ENCODE measurements at regions of chr20 and their contacts with region 1.

Region 1: GRCh38 chr20:44683263-44684046 is 31.7 kb upstream of the CCN5 start:
- DNase-seq: peak; percentile 28
- H3K4me3 Mint-ChIP-seq: no peak overlapping the region
- H3K27ac Mint-ChIP-seq: no peak overlapping the region
- H3K4me1 Mint-ChIP-seq: peaks cover 5% of the 10 kb centered on the region
- H3K27me3 Mint-ChIP-seq: peaks cover 5% of the 10 kb centered on the region

Region 2: DNA sequence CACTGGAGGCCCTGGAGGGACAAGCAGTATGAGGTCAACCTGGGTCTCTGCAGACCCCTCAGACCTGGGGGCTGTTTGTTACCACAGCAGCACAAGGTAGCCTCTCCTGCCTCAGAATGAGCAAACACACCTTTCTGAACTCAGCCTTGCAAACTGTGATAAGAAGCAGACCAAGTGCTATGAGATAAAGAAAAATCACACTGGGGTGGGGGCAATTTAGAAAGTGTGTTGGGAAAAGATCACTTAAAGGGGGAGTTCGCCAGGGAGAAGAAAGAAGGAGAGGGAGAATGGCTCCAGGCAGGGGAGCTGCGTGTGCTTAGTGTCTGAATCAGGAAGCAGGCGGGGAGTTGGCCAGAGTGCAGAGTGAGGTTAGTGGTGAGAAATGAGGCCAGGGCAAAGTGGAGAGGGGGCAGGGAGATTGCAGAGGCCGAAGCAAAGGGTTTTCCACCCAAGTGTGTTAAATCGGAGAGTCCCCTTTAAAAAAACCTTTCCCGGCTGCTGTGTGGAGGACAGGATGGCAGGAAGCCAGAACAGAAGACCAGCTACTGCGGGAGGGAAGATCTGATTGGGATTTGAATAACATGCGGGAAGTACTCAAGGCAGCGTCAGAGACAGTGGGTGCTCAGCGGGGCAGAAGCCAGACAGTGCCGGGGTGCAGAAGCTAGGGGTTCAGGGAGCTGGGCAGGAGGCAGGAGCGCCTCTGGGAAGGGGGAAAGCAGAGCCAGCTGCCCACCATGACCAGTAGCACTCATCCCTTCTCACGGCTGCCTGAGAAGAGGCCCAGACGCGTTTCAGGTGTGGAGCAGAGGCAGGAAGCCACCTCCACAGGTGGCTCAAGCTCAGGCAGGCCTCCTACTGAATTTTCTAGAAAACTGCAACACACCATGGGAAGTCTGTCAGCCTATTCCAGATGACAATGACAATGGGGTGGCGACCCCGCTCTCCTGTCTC is 41.0 kb before region 1 on chr20:
- intact Hi-C with region 1: loop called (anchors 5 kb)
- DNase-seq: no peak
- H3K4me3 Mint-ChIP-seq: peak overlapping the region; percentile 14
- H3K27ac Mint-ChIP-seq: peak overlapping the region; percentile 87
- H3K4me1 Mint-ChIP-seq: peaks cover 60% of the 10 kb centered on the region
- H3K27me3 Mint-ChIP-seq: no peaks in the 10 kb centered on the region

Region 3: DNA sequence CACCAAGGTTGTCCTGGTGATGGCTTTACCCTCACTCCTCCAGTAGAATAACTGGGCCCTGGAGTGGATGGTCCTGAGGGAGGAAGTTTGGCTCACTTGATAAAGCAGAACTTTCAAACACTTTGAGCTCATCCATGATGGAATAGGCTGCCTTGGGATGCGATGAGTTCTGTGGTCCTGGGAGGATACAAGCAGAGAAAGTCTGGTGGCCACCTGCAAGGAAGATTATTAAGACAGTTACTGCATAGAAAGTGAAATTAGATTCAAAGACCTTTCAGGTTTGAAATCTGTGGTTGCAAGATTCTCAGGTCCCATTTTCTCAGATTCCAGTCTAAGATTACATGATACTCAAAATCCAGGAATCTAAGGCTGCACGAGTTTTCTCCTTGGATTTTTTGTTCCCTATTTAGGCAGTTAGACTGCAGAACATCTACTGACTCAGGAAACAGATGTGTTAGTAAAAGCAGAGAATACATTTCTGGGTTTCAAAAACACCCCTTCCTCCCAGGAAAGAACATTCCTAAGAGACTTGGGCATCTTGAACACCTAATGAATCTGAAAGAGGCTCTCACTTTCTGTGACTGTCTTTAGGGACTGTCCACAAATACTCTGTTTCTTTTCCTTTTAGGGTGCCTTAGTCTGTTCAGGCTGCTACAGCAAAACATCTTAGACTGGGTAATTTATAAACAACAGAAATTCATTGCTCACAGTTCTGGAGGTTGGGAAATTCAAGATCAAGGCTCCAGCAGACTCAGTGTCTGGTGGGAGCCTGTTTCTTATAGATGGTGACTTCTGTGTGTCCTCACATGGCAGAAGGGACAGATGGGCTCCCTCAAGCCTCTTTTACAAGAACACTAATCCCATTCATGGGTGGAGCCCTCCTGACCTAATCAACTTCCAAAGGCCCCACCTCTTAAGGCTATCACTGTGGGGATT is 12.1 kb after region 1 on chr20:
- intact Hi-C with region 1: no loop called
- DNase-seq: no peak
- H3K4me3 Mint-ChIP-seq: no peak overlapping the region
- H3K27ac Mint-ChIP-seq: no peak overlapping the region
- H3K4me1 Mint-ChIP-seq: peaks cover 2% of the 10 kb centered on the region
- H3K27me3 Mint-ChIP-seq: peaks cover 2% of the 10 kb centered on the region

Region 4: DNA sequence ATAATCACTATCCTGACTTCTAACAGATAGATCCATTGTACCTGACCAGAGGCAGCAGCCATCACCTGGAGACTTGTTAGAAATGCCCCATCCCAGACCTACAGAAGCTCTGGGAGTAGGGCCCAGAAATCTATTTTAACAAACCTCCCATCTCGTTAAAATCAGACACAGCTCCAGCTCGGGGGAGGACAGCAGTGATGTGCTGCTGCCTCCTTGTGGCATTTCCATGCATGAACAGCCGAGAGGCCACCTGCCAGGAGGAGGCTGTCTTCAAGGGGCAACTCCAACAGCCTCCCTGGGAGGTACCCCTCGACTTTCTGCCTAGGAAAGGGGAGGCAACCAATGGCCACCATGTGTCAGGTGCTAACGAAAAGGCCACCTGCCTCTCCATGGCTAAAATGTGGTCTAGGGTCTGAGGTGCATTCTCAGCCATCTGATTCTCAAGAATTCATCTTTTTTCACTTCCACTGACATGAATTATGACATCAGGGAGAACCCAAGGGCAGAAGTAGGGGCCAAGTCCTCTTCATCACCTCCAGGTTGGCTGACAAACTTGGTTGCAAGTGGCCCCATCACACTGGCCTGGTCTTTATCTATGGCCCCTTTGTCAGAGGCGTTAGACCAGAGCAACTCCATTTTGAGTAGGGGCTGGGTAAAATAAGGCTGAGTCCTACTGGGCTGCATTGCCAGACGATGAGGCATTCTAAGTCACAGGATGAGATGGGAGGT is 50.0 kb after region 1 on chr20:
- intact Hi-C with region 1: loop called (anchors 1 kb)
- DNase-seq: peak; percentile 49
- H3K4me3 Mint-ChIP-seq: no peak overlapping the region
- H3K27ac Mint-ChIP-seq: no peak overlapping the region
- H3K4me1 Mint-ChIP-seq: peaks cover 20% of the 10 kb centered on the region
- H3K27me3 Mint-ChIP-seq: no peaks in the 10 kb centered on the region

Region 5: GRCh38 chr20:44866703-44867335 is 183.4 kb after region 1 on chr20:
- intact Hi-C with region 1: loop called (anchors 1 kb)
- DNase-seq: no peak
- H3K4me3 Mint-ChIP-seq: peak overlapping the region; percentile 40
- H3K27ac Mint-ChIP-seq: no peak overlapping the region
- H3K4me1 Mint-ChIP-seq: peaks cover 5% of the 10 kb centered on the region
- H3K27me3 Mint-ChIP-seq: peaks cover 21% of the 10 kb centered on the region

Measured in activated T-helper 2 cell treated with anti-CD3 and anti-CD28 coated beads, Interferon-gamma antibody, Interleukin-2, Interleukin-4, amounts not matched to agents 10 μg/mL and 5 μg/mL and 100 μg/mL, durations not matched to agents 14 hours and 24 hours and 36 hours (primary cell).